Natural killer cell (primary cell): ENCODE measurements at regions of chr6 and their contacts with region 1.

Region 1: DNA sequence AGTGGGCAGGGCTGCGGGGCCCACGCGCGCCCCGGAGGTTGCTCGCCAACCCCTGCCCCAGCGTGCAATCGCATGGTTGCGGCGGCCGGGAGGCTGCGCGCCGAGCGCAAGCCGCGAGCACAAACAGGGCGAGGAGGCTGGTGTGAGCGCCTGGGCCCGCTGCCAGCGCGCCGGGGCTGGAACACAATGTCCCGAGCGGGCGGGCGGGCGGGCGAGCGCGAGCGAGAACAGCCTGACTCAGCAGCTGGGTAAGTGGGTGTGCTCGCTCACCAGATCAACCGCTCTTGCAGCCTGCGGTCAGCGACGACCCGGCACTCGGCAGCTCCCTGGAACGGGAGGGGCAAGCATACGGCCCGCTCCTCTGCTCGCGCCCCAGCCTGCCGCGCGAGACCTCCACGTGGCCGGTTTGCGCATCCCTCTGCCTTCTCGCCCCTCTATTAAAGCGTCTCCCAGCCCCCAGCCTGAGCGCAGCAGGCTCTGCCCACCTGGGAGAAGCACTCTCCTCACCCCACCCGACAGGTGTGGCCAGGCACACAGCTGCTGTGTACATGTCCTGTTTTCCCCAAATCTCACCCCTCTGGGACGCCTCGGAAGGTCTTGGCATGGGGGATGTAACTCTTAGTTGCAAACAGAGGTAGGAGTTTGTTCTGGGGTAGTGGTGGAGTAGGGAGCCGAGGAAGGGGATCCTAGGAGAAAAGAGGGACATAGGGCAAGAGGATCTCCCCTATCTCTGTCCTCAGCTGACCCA is 8.7 kb upstream of the ARMC12 start:
- DNase-seq: peak; percentile 83 to 95
- ATAC-seq: peak; percentile 64 to 81 (median 76)
- H3K4me3 ChIP-seq: peak overlapping the region; percentile 38
- H3K4me3 Mint-ChIP-seq: peak overlapping the region; percentile 67
- H3K27ac ChIP-seq: peak overlapping the region; percentile 82
- H3K27ac Mint-ChIP-seq: peak overlapping the region; percentile 72 to 83
- H3K4me1 ChIP-seq: peaks cover 74% of the 10 kb centered on the region
- H3K4me1 Mint-ChIP-seq: peaks cover 51 to 76% of the 10 kb centered on the region in 2 donors
- H3K27me3 ChIP-seq: no peaks in the 10 kb centered on the region
- H3K27me3 Mint-ChIP-seq: no peaks in the 10 kb centered on the region
- CTCF ChIP-seq: no peak

Region 2: DNA sequence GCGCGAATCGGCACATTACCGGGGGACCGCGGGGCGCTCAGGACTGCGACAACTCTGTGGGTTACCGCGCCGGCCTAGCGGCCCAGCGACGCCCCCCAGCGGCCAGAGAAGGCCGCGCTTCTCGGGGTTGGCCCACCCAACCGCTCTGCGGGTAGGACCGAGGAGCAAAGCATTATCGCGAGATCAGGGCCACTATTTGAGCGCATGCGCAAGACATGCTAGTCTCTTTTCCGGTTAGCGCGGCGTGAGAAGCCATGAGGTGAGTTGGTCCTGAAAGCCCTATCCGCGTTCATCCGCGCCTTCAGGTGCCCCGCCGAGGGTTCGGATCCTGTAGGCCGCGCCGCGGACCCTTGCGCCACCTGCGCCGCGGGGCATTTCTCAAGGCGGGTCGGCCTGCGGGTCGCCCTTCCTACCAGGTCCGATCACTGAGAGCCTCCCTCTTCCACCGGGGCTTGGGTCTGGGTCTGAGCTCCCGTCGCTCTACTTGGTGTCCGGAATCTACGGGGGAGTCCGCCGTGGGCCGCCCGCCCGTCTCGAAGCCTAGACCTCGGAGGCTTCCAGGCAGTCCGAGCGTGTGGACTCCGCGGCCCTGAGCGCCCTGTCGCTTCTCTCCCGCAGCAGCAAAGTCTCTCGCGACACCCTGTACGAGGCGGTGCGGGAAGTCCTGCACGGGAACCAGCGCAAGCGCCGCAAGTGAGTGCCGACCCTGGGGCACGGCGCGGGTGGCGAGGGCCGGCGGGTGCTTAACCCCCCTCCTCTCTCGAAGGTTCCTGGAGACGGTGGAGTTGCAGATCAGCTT is 259.7 kb before region 1 on chr6 and contains the start of gene RPL10A:
- intact Hi-C with region 1: loop called (anchors 2 kb)
- DNase-seq: peak; percentile 91 to 99
- ATAC-seq: peak; percentile 87 to 97 (median 89)
- H3K4me3 ChIP-seq: peak within 1 kb of the TSS; percentile 67
- H3K4me3 Mint-ChIP-seq: peak within 1 kb of the TSS; percentile 97
- H3K27ac ChIP-seq: peak within 1 kb of the TSS; percentile 79
- H3K27ac Mint-ChIP-seq: peak within 1 kb of the TSS; percentile 92 to 98
- H3K4me1 ChIP-seq: peaks cover 31% of the 10 kb centered on the region
- H3K4me1 Mint-ChIP-seq: peaks cover 38% of the 10 kb centered on the region in 2 donors
- H3K27me3 ChIP-seq: no peaks in the 10 kb centered on the region
- H3K27me3 Mint-ChIP-seq: no peaks in the 10 kb centered on the region
- CTCF ChIP-seq: peak; percentile 87
- total RNA-seq, gene RPL10A: 723 to 943 (median 942) TPM

Region 3: DNA sequence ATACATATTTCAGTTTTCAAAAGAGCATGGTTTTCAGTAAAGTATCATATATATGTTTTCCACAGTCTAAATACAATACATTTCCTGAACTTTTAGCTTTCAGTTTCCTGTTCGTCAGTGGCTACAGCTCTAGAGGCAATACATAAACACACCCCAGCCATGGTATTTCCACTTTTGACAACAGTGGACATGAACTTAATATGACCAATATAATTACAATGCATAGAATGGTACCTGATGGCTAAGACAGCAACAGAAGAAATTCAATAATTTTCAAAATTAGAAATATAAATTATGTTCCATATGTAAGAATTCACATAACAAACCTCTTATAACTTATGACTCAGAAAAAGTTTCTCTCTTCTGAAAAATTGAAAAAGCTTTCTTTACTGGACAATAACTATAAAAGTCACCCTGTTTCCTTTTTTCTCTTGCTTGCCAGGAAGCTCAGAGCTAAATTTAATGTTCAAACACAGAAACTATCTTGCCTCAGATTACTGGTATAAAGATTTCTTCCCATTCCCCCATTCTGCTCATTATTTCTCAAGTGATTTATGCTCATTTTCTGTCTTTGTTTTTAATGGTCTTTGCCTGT is 58.6 kb before region 1 on chr6:
- intact Hi-C with region 1: loop called (anchors 5 kb)
- DNase-seq: peak in 1 of 2 donors; percentile 64
- ATAC-seq: peak; percentile 63 to 79 (median 74)
- H3K4me3 ChIP-seq: peak overlapping the region; percentile 13
- H3K4me3 Mint-ChIP-seq: peak overlapping the region; percentile 87
- H3K27ac ChIP-seq: peak overlapping the region; percentile 54
- H3K27ac Mint-ChIP-seq: peak overlapping the region; percentile 82 to 90
- H3K4me1 ChIP-seq: peaks cover 20% of the 10 kb centered on the region
- H3K4me1 Mint-ChIP-seq: peaks cover 30 to 36% of the 10 kb centered on the region in 2 donors
- H3K27me3 ChIP-seq: no peaks in the 10 kb centered on the region
- H3K27me3 Mint-ChIP-seq: no peaks in the 10 kb centered on the region
- CTCF ChIP-seq: no peak

Region 4: GRCh38 chr6:35688581-35689322 is 39.4 kb before region 1 on chr6 and contains the start of gene FKBP5:
- intact Hi-C with region 1: loop called (anchors 1 kb)
- DNase-seq: peak; percentile 89 to 92
- ATAC-seq: peak; percentile 94 to 98 (median 95)
- H3K4me3 ChIP-seq: peak within 1 kb of the TSS; percentile 67
- H3K4me3 Mint-ChIP-seq: peak within 1 kb of the TSS; percentile 99
- H3K27ac ChIP-seq: peak within 1 kb of the TSS; percentile 58
- H3K27ac Mint-ChIP-seq: peak within 1 kb of the TSS; percentile 84 to 96
- H3K4me1 ChIP-seq: peaks cover 6% of the 10 kb centered on the region
- H3K4me1 Mint-ChIP-seq: peaks cover 17 to 22% of the 10 kb centered on the region in 2 donors
- H3K27me3 ChIP-seq: no peaks in the 10 kb centered on the region
- H3K27me3 Mint-ChIP-seq: no peaks in the 10 kb centered on the region
- CTCF ChIP-seq: no peak
- total RNA-seq, gene FKBP5: 15.5 to 30.2 (median 27.3) TPM

Region 5: GRCh38 chr6:35710241-35710847 is 17.8 kb before region 1 on chr6:
- intact Hi-C with region 1: loop called (anchors 1 kb)
- DNase-seq: peak in 1 of 2 donors; percentile 59
- ATAC-seq: peak; percentile 80 to 96 (median 91)
- H3K4me3 ChIP-seq: no peak overlapping the region
- H3K4me3 Mint-ChIP-seq: peak overlapping the region; percentile 22
- H3K27ac ChIP-seq: no peak overlapping the region
- H3K27ac Mint-ChIP-seq: peak overlapping the region; percentile 18 to 36
- H3K4me1 ChIP-seq: peaks cover 23% of the 10 kb centered on the region
- H3K4me1 Mint-ChIP-seq: peaks cover 19% of the 10 kb centered on the region in 2 donors
- H3K27me3 ChIP-seq: no peaks in the 10 kb centered on the region
- H3K27me3 Mint-ChIP-seq: no peaks in the 10 kb centered on the region
- CTCF ChIP-seq: no peak